Esophagus muscularis mucosa (tissue), 4 donors: ENCODE measurements at regions of chr11 and their contacts with region 1.

Region 1: GRCh38 chr11:7892840-7893254 is 38.2 kb downstream of the OR10A6 start:
- DNase-seq: no peak
- H3K4me3 ChIP-seq: no peak overlapping the region
- H3K27ac ChIP-seq: no peak overlapping the region
- H3K4me1 ChIP-seq: peaks cover 0 to 7% (median 2%) of the 10 kb centered on the region in 4 donors
- H3K27me3 ChIP-seq: peaks cover 0 to 3% (median 0%) of the 10 kb centered on the region in 4 donors
- CTCF ChIP-seq: peak; percentile 54 to 76 (median 59)
- EP300 ChIP-seq: no peak
- POLR2A ChIP-seq: no peak

Region 2: GRCh38 chr11:7986768-7987559 is 94.1 kb after region 1 on chr11 and contains the start of gene EIF3F:
- intact Hi-C with region 1: loop called (anchors 2 kb)
- DNase-seq: peak; percentile 99
- H3K4me3 ChIP-seq: peak within 1 kb of the TSS; percentile 78 to 91 (median 82)
- H3K27ac ChIP-seq: peak within 1 kb of the TSS; percentile 72 to 86 (median 82)
- H3K4me1 ChIP-seq: peaks cover 24 to 48% (median 37%) of the 10 kb centered on the region in 4 donors
- H3K27me3 ChIP-seq: no peaks in the 10 kb centered on the region
- CTCF ChIP-seq: peak; percentile 78 to 92 (median 89)
- EP300 ChIP-seq: no peak
- POLR2A ChIP-seq: no peak
- total RNA-seq, gene EIF3F: 181 to 447 (median 313) TPM

Region 3: DNA sequence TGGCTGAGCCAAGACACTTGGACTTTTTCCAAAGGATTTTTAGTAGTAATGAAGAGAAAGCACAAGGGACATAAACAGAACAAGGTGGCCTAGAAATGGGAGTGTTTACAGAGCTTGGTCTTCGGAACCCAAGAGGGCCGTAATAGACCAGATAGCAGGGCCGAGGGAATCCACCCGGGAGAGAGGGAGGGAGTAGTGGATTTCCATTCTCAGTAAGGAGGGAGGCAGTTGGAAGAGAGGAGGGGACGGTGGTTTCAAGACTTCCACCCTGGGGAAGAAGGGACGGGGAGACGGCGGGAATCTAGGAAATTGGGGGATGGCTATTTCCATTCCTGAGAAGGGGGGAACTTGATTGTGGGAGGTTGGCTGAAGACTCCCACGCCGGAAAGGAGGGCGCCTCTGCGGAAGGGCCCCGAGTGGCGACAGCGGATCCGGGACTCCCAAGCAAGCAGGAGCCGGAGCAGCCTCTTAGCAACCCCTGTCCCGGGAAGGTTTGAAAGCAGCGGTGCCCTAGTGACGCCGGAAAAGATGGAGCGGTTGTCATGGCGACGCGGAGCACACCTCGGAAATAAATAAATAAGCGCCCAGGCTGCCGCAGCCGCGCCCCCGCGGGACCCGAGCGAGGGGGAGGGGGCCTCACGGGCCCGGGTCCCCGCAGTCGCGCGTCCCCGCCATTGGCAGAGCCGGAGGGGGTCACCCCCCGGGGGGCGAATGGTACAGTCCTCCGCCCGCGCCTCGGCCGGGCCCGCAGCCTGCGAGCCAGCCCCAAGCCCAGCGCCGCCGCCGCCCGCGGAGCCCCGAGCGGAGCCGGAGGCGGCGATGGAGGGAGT is 125.9 kb after region 1 on chr11:
- intact Hi-C with region 1: no loop called
- DNase-seq: peak; percentile 93
- H3K4me3 ChIP-seq: peak overlapping the region; percentile 70 to 92 (median 86)
- H3K27ac ChIP-seq: peak overlapping the region; percentile 86 to 95 (median 91)
- H3K4me1 ChIP-seq: peaks cover 14 to 41% (median 30%) of the 10 kb centered on the region in 4 donors
- H3K27me3 ChIP-seq: peaks cover 0 to 15% (median 0%) of the 10 kb centered on the region in 4 donors
- CTCF ChIP-seq: no peak
- EP300 ChIP-seq: no peak
- POLR2A ChIP-seq: no peak